Calu3 (cell line): ENCODE measurements at regions of chr4 and their contacts with region 1.

Region 1: GRCh38 chr4:73729534-73730165 is 10.7 kb upstream of the CXCL8 start:
- DNase-seq: peak; percentile 59
- H3K4me3 Mint-ChIP-seq: peak overlapping the region; percentile 20
- H3K27ac Mint-ChIP-seq: peak overlapping the region; percentile 89
- H3K4me1 Mint-ChIP-seq: peaks cover 82% of the 10 kb centered on the region
- H3K27me3 Mint-ChIP-seq: no peaks in the 10 kb centered on the region
- CTCF ChIP-seq: peak; percentile 47

Region 2: GRCh38 chr4:73668782-73669201 is 60.9 kb before region 1 on chr4:
- CTCF ChIA-PET with region 1: interaction called, 11 read pairs
- intact Hi-C with region 1: loop called (anchors 2 kb)
- DNase-seq: no peak
- H3K4me3 Mint-ChIP-seq: peak overlapping the region; percentile 50
- H3K27ac Mint-ChIP-seq: peak overlapping the region; percentile 97
- H3K4me1 Mint-ChIP-seq: peaks cover 51% of the 10 kb centered on the region
- H3K27me3 Mint-ChIP-seq: no peaks in the 10 kb centered on the region
- CTCF ChIP-seq: no peak

Region 3: GRCh38 chr4:73676861-73677323 is 52.8 kb before region 1 on chr4:
- CTCF ChIA-PET with region 1: interaction called, 7 read pairs
- intact Hi-C with region 1: loop called (anchors 5 kb)
- DNase-seq: peak; percentile 49
- H3K4me3 Mint-ChIP-seq: no peak overlapping the region
- H3K27ac Mint-ChIP-seq: peak overlapping the region; percentile 79
- H3K4me1 Mint-ChIP-seq: peaks cover 46% of the 10 kb centered on the region
- H3K27me3 Mint-ChIP-seq: no peaks in the 10 kb centered on the region
- CTCF ChIP-seq: no peak

Region 4: DNA sequence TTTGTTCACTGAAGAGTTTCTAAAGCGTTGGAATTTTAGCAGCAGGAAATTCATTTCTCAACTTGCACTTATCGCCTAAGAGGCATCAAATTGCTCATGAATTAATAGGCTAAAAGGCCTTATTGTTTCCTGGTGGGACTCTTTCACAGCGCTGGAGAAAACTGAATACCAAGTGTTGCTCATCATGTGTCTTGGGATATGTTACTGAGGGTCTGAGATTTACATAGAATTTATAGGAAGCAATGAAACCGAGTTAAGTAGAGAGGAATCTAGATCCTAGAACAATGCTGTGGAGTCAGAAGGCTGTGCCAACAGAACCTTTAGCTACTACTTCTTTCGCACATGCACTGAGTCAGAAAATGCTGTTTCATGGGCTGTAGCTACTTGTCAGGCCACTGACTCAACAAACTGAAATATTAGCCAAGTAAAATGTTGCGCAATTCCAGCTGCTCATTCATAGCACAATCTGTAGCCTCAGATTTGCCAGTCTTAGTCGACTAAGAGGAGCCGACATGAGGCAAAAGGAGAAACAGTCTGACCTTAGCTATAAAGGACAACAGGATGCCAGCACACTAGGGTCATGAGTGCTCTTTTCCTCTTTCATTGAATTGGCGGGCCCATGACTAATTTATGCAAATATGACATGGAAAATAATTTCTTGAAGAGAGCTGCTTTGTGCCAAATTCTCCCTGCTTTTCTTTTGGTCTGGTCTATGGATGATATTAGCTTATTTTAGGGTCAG is 25.2 kb before region 1 on chr4:
- CTCF ChIA-PET with region 1: interaction called, 8 read pairs
- intact Hi-C with region 1: loop called (anchors 2 kb)
- DNase-seq: peak; percentile 66
- H3K4me3 Mint-ChIP-seq: no peak overlapping the region
- H3K27ac Mint-ChIP-seq: peak overlapping the region; percentile 95
- H3K4me1 Mint-ChIP-seq: peaks cover 67% of the 10 kb centered on the region
- H3K27me3 Mint-ChIP-seq: no peaks in the 10 kb centered on the region
- CTCF ChIP-seq: no peak

Region 5: DNA sequence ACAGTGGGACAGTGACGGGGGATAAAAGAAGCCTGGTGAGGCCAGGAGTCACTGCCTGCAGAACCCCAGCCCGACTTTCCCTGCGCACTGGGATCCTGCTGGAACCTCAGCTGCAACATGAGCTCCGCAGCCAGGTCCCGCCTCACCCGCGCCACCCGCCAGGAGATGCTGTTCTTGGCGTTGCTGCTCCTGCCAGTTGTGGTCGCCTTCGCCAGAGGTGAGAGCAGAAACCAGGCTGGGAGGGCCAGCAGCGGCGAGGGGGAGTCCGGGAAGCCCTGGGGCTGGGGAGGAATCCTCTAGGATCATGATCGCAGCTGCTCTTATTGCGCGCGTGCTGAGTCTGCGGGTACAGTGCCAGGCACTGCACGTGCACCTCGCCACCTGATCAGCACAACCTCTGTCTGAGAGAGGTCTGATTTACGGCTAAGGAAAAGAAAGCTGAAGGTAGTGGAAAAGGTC is 123.6 kb after region 1 on chr4 and contains the start of gene PF4V1:
- CTCF ChIA-PET with region 1: no interaction called
- intact Hi-C with region 1: no loop called
- DNase-seq: no peak
- H3K4me3 Mint-ChIP-seq: no peak within 1 kb of the TSS
- H3K27ac Mint-ChIP-seq: no peak within 1 kb of the TSS
- H3K4me1 Mint-ChIP-seq: no peaks in the 10 kb centered on the region
- H3K27me3 Mint-ChIP-seq: no peaks in the 10 kb centered on the region
- CTCF ChIP-seq: no peak
- total RNA-seq, gene PF4V1: not detected in 2 replicates

Region 6: DNA sequence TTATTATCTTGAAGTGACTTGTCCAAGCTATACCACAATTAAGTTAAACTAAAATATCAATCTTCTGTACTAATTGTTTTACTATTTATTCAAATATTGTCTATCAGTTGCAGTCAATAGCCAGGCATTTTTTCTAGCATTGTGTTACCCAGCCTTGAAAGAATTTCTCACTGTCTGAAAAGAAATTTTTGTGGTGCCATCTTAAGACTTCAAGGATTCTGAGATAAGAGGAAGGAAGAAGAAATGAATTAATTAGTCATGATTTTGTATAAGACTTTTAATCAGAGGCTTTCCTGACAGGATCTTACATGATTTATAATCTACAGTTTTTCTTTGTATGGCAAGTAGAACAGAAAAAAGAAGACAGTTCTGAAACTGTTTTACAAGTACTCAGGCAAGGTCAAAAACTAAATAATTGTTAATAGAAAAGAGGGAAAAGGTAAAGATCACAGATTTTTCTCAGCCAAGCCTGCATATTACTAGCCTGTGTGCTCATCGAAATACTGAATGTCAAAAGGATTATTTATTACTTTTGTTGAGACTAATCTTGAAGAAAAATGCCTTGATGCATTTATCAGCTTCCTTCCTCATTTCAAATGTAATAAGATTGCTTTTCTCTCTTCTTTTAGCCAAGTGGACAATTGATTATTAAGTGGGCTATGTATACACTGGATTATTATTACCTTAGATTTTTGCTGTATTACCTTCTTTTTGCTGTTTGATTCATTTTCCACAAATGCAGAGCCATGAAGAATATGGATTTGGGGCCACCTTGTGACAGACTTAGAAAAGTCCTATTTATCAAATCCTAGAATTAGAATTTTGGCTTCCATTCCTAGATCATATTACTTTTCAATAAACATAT is 193.3 kb after region 1 on chr4:
- CTCF ChIA-PET with region 1: no interaction called
- intact Hi-C with region 1: loop called (anchors 5 kb)
- DNase-seq: peak; percentile 41
- H3K4me3 Mint-ChIP-seq: no peak overlapping the region
- H3K27ac Mint-ChIP-seq: peak overlapping the region; percentile 23
- H3K4me1 Mint-ChIP-seq: peaks cover 22% of the 10 kb centered on the region
- H3K27me3 Mint-ChIP-seq: no peaks in the 10 kb centered on the region
- CTCF ChIP-seq: no peak

Region 7: GRCh38 chr4:74006009-74006476 is 276.4 kb after region 1 on chr4:
- CTCF ChIA-PET with region 1: no interaction called
- intact Hi-C with region 1: no loop called
- DNase-seq: no peak
- H3K4me3 Mint-ChIP-seq: peak overlapping the region; percentile 25
- H3K27ac Mint-ChIP-seq: peak overlapping the region; percentile 86
- H3K4me1 Mint-ChIP-seq: peaks cover 5% of the 10 kb centered on the region
- H3K27me3 Mint-ChIP-seq: no peaks in the 10 kb centered on the region
- CTCF ChIP-seq: no peak

Region 8: GRCh38 chr4:74117024-74117534 is 387.4 kb after region 1 on chr4:
- CTCF ChIA-PET with region 1: no interaction called
- intact Hi-C with region 1: loop called (anchors 10 kb)
- DNase-seq: peak; percentile 67
- H3K4me3 Mint-ChIP-seq: peak overlapping the region; percentile 26
- H3K27ac Mint-ChIP-seq: peak overlapping the region; percentile 97
- H3K4me1 Mint-ChIP-seq: peaks cover 34% of the 10 kb centered on the region
- H3K27me3 Mint-ChIP-seq: no peaks in the 10 kb centered on the region
- CTCF ChIP-seq: no peak